ENCODE measurements at regions of chr17 and their contacts with region 1.

Region 1: DNA sequence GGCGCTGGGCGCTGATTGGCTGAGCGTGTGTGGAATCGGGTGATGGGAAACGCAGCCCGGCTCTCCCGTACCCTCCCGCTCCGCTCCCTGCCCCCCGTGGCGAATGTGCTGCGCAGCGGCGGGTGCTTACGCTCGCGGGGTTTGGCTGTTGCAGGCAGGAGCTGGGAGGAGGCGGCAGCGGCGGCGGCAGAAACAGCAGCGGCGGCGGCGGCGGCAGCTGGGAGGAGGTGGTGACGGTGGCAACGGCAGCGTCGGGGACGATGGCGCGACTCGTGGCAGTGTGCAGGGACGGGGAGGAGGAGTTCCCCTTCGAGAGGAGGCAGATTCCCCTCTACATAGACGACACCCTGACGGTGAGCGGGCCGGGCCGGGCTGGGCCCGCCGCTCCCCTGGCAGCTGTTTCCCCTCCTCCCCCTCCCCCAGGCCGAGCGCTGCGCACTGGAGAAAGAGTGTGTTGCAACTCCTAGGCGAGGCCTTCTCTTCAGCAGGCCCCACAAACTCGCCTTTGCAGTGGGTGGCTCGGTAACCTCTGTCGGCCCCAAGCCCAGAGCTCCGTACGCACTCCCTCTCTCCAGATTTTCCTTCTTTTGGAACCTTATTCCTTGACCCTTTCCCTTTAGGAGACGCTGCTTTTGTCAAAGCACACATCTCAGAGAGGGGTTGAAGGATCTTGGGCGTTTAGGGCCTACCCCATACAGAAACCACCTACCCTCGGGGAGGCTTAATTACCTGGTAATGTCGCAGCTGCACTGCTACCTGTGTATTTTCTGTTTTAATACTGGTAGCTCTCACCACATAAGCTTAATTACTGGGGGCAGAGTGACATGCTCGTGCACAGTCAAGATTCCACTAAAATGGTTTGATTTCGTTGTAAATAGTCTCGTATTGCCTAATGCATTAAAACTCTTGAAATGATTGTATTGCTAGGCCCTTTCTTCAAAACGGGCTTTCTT is 1.0 kb downstream of the GGNBP2 start:
- DNase-seq: peak; percentile 92 to 98 (median 96)
- H3K4me3 ChIP-seq: peak overlapping the region; percentile 68 to 99 (median 94)
- H3K27ac ChIP-seq: peak overlapping the region; percentile 70 to 100 (median 99)
- H3K27me3 ChIP-seq: no peaks in the 10 kb centered on the region
- CTCF ChIP-seq: peak in 31 of 56 donors; percentile 10 to 51 (median 27)

Region 2: GRCh38 chr17:36486204-36487194 is 59.2 kb before region 1 on chr17 and contains the start of gene ZNHIT3:
- intact Hi-C with region 1: loop called (anchors 5 to 10 kb)
- DNase-seq: peak; percentile 84 to 95 (median 93)
- H3K4me3 ChIP-seq: peak within 1 kb of the TSS; percentile 72 to 100 (median 96)
- H3K27ac ChIP-seq: peak within 1 kb of the TSS in 51 of 59 donors; percentile 10 to 89 (median 77)
- H3K27me3 ChIP-seq: no peaks in the 10 kb centered on the region
- CTCF ChIP-seq: peak in 37 of 56 donors; percentile 7 to 62 (median 36)
- total RNA-seq, gene ZNHIT3: 26.6 to 61.2 (median 43.9) TPM

Region 3: GRCh38 chr17:36534840-36535668 is 10.7 kb before region 1 on chr17 and contains the starts of genes MYO19 and PIGW:
- intact Hi-C with region 1: loop called in 1 of 2 experiments (anchors 1 kb)
- DNase-seq: peak; percentile 71 to 93 (median 82)
- H3K4me3 ChIP-seq: peak within 1 kb of the TSS; percentile 67 to 99 (median 92)
- H3K27ac ChIP-seq: peak within 1 kb of the TSS; percentile 11 to 97 (median 89)
- H3K27me3 ChIP-seq: no peaks in the 10 kb centered on the region
- CTCF ChIP-seq: peak in 41 of 56 donors; percentile 13 to 61 (median 37)
- total RNA-seq, gene MYO19: 24.1 to 75.5 (median 48.2) TPM
- total RNA-seq, gene PIGW: 1.5 to 8.5 (median 4.2) TPM

Region 4: DNA sequence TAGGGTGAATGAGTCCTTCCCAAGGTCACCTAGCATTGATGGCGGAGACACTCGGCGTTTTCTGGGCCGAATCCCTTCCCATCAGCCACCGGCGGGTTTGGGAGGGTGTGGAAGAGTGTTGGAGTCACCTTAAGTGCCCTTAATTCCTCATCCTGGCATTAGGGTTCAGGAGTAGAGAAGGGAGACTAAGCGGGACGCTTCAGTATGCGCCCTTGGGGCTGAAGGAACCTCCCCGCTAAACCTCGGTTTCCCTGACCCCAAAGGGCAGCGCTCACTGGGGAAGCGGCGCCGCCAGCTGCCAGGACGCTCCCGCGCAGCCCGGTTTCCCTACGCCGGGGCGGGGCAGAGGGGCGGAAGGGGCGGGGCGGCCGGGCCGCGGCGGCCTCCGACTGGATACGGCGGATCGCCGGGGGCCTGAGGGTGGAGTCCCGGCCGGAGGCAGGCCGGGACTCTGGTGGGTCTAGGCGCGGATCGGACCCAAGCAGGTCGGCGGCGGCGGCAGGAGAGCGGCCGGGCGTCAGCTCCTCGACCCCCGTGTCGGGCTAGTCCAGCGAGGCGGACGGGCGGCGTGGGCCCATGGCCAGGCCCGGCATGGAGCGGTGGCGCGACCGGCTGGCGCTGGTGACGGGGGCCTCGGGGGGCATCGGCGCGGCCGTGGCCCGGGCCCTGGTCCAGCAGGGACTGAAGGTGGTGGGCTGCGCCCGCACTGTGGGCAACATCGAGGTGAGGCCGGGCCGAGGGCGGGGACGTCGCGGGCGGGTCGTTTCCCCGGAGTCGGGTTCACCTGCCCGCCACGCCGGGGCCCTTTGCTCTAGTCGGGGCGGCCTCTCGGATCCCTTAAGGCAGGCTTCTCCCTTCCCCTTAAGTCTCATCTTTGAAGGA is 45.9 kb after region 1 on chr17 and contains the start of gene DHRS11:
- intact Hi-C with region 1: loop called in 1 of 2 experiments (anchors 5 kb)
- DNase-seq: peak; percentile 68 to 91 (median 80)
- H3K4me3 ChIP-seq: peak within 1 kb of the TSS; percentile 62 to 98 (median 85)
- H3K27ac ChIP-seq: peak within 1 kb of the TSS in 54 of 59 donors; percentile 3 to 86 (median 62)
- H3K27me3 ChIP-seq: no peaks in the 10 kb centered on the region
- CTCF ChIP-seq: peak in 31 of 56 donors; percentile 7 to 52 (median 28)
- total RNA-seq, gene DHRS11: 12.5 to 49.2 (median 28.7) TPM

Region 5: DNA sequence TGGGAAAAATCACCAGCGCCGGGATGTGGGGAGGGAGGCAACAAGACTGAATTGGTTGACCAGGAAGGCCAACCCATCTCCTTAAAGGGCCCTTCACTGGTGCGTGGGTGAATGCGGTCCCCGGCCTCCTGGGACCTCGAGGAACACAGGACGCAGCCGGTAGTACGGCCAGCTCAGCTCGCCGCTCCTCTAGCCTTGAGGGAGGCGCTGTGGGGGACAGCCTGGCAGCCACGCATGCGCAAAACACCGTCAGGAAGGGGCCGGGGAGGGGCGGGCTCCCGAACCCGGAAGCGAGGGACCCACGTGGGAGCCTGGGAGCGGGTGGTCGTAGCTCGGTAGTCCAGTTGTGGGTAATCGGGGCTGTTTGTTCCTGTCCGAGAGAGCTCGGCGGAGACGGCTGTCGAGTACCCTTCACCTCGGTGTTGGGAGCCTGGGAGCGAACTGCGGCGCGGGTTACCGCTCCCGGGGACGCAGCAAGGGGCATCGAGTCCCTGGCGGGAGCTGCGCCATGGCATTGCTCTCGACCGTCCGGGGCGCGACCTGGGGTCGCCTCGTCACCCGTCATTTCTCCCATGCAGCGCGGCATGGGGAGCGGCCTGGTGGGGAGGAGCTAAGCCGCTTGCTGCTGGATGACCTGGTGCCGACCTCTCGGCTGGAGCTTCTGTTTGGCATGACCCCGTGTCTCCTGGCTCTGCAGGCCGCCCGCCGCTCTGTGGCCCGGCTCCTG is 55.7 kb after region 1 on chr17 and contains the start of gene MRM1:
- intact Hi-C with region 1: loop called (anchors 2 kb)
- DNase-seq: peak; percentile 89 to 95 (median 94)
- H3K4me3 ChIP-seq: peak within 1 kb of the TSS; percentile 61 to 100 (median 96)
- H3K27ac ChIP-seq: peak within 1 kb of the TSS in 56 of 59 donors; percentile 9 to 88 (median 76)
- H3K27me3 ChIP-seq: no peaks in the 10 kb centered on the region
- CTCF ChIP-seq: peak in 53 of 56 donors; percentile 23 to 74 (median 57)
- total RNA-seq, gene MRM1: 4.4 to 12.1 (median 8.0) TPM